ENCODE measurements at regions of chr6 and their contacts with region 1.

Region 1: GRCh38 chr6:118283766-118284165 is 264.3 kb upstream of the PLN start:
- DNase-seq: peak in 1 of 2 donors; percentile 73
- ATAC-seq: peak in 7 of 8 donors; percentile 29 to 68 (median 57)
- H3K4me3 ChIP-seq: peak overlapping the region in 1 of 10 donors; percentile 25
- H3K27ac ChIP-seq: peak overlapping the region in 2 of 10 donors; percentile 80 to 83
- H3K4me1 ChIP-seq: peaks cover 0 to 50% (median 9%) of the 10 kb centered on the region in 9 donors
- H3K27me3 ChIP-seq: no peaks in the 10 kb centered on the region
- CTCF ChIP-seq: peak; percentile 59 to 89 (median 82)

Region 2: GRCh38 chr6:118111708-118112107 is 172.1 kb before region 1 on chr6:
- intact Hi-C with region 1: no loop called
- DNase-seq: no peak
- ATAC-seq: no peak
- H3K4me3 ChIP-seq: no peak overlapping the region
- H3K27ac ChIP-seq: no peak overlapping the region
- H3K4me1 ChIP-seq: no peaks in the 10 kb centered on the region
- H3K27me3 ChIP-seq: no peaks in the 10 kb centered on the region
- CTCF ChIP-seq: no peak

Region 3: DNA sequence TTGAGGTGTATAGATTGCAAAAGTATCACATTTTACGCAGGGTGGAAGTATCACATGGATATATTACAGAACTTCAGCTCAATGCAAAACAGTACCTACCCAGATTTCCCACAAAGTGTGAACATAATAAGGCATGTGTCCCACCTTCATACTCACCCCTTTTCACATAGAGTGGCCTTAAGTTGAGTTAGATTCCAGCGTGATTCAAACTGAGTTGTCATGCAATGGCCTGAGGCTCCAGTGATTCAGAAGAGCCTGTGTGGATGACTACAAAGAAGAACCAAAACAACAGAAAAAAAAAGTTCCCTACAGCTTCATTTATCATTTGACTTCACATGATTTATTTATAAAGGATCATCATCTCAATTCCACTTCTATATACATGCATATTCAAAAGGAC is 67.0 kb before region 1 on chr6:
- intact Hi-C with region 1: no loop called
- DNase-seq: no peak
- ATAC-seq: no peak
- H3K4me3 ChIP-seq: no peak overlapping the region
- H3K27ac ChIP-seq: no peak overlapping the region
- H3K4me1 ChIP-seq: peaks cover 0 to 12% (median 3%) of the 10 kb centered on the region in 9 donors
- H3K27me3 ChIP-seq: no peaks in the 10 kb centered on the region
- CTCF ChIP-seq: no peak

Region 4: DNA sequence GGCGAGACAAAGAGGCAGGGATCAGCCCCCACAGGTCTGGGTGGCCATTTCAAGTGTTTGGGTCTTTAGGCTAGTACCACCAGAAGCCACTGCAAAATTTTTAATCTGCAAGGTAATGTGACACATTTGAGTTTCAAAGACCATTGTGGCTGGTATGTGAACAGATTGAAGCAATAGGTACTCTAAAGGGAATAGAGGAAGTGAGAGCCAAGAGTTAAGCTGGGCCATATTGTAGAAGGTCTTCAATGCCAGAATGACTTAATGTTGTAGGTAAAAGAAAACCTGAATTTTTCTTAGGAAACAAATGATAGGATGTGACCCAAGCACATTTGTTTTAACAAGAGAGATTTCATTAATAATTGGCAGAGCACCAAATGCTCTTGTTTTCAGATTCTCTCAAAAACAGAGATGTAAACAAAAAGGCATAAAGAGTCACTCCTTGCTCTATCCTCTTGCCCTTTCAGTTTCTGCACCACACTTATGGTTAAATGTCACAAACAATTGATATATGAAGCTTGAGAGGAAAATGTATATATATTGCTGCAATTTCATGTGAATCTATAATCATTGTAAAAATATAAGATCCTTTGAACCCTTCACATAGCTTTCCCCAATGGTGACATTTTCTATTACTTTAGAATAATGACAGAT is 42.8 kb before region 1 on chr6:
- intact Hi-C with region 1: loop called in 1 of 10 experiments (anchors 2 kb)
- DNase-seq: no peak
- ATAC-seq: no peak
- H3K4me3 ChIP-seq: no peak overlapping the region
- H3K27ac ChIP-seq: no peak overlapping the region
- H3K4me1 ChIP-seq: peaks cover 0 to 4% (median 0%) of the 10 kb centered on the region in 9 donors
- H3K27me3 ChIP-seq: peaks cover 0 to 3% (median 0%) of the 10 kb centered on the region in 7 donors
- CTCF ChIP-seq: no peak

Region 5: GRCh38 chr6:118509009-118509617 is 225.3 kb after region 1 on chr6:
- intact Hi-C with region 1: loop called (anchors 1 to 10 kb)
- DNase-seq: peak in 1 of 2 donors; percentile 43
- ATAC-seq: peak in 1 of 8 donors; percentile 43
- H3K4me3 ChIP-seq: no peak overlapping the region
- H3K27ac ChIP-seq: peak overlapping the region in 8 of 10 donors; percentile 33 to 83 (median 80)
- H3K4me1 ChIP-seq: peaks cover 0 to 33% (median 17%) of the 10 kb centered on the region in 9 donors
- H3K27me3 ChIP-seq: no peaks in the 10 kb centered on the region
- CTCF ChIP-seq: peak; percentile 39 to 81 (median 71)

Region 6: DNA sequence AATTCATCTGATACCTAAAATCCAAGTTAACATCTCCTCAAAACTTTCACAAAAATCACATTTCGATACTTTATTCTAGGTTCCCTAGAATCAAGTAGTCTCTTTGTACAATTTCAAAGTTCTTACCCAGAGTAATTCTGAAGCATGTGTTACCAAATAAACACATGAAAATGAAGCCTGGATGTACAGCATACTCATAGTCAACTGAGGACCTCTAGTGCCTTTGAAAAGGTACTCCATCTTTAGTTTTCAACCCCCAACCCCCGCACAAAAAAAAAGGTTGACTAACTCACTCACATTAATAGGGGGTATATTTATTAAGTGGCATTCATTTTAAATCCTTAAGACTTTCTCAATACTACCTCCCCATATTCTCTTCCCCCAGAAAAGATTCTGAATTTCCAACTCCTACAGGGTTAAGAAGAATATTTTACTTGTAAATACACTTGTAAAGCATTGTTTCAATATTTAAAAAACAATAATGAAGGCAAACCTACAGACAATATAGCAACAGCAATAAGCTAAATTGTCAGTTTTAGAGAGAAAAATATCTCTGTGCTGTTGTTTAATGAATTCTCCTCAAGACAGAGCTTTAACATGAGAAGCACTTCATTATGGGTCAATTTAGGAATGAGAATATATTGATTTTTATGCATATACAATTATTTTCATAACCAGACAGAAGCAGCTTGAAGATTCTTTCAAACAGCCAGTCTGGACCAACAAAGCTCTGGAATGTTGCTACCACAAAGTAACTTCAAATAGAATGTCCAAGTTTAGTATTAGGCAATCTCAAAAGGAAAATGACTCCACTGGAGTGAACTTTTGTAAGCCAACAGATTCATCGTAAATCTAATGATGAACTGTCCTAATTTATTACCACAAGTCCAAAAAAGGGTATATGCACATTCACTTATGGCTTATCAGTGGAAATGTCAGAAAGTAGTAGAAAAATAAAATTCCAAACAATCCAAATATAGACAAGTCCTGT is 267.6 kb after region 1 on chr6:
- intact Hi-C with region 1: loop called in 6 of 10 experiments (anchors 2 to 10 kb)
- DNase-seq: no peak
- ATAC-seq: peak in 7 of 8 donors; percentile 43 to 69 (median 67)
- H3K4me3 ChIP-seq: peak overlapping the region; percentile 29 to 60 (median 50)
- H3K27ac ChIP-seq: peak overlapping the region in 9 of 10 donors; percentile 37 to 89 (median 81)
- H3K4me1 ChIP-seq: peaks cover 0 to 12% (median 0%) of the 10 kb centered on the region in 9 donors
- H3K27me3 ChIP-seq: no peaks in the 10 kb centered on the region
- CTCF ChIP-seq: peak; percentile 30 to 74 (median 55)

Region 7: GRCh38 chr6:118580585-118581419 is 297.0 kb after region 1 on chr6:
- intact Hi-C with region 1: loop called in 7 of 10 experiments (anchors 2 to 10 kb)
- DNase-seq: peak in 1 of 2 donors; percentile 43
- ATAC-seq: peak; percentile 85 to 92 (median 91)
- H3K4me3 ChIP-seq: no peak overlapping the region
- H3K27ac ChIP-seq: peak overlapping the region in 1 of 10 donors; percentile 51
- H3K4me1 ChIP-seq: peaks cover 0 to 29% (median 7%) of the 10 kb centered on the region in 9 donors
- H3K27me3 ChIP-seq: no peaks in the 10 kb centered on the region
- CTCF ChIP-seq: peak; percentile 48 to 80 (median 71)

Region 8: GRCh38 chr6:118770112-118770788 is 486.5 kb after region 1 on chr6:
- intact Hi-C with region 1: loop called in 6 of 10 experiments (anchors 5 to 10 kb)
- DNase-seq: no peak
- ATAC-seq: no peak
- H3K4me3 ChIP-seq: no peak overlapping the region
- H3K27ac ChIP-seq: peak overlapping the region in 1 of 10 donors; percentile 89
- H3K4me1 ChIP-seq: peaks cover 0 to 32% (median 0%) of the 10 kb centered on the region in 9 donors
- H3K27me3 ChIP-seq: no peaks in the 10 kb centered on the region
- CTCF ChIP-seq: no peak

Region 9: DNA sequence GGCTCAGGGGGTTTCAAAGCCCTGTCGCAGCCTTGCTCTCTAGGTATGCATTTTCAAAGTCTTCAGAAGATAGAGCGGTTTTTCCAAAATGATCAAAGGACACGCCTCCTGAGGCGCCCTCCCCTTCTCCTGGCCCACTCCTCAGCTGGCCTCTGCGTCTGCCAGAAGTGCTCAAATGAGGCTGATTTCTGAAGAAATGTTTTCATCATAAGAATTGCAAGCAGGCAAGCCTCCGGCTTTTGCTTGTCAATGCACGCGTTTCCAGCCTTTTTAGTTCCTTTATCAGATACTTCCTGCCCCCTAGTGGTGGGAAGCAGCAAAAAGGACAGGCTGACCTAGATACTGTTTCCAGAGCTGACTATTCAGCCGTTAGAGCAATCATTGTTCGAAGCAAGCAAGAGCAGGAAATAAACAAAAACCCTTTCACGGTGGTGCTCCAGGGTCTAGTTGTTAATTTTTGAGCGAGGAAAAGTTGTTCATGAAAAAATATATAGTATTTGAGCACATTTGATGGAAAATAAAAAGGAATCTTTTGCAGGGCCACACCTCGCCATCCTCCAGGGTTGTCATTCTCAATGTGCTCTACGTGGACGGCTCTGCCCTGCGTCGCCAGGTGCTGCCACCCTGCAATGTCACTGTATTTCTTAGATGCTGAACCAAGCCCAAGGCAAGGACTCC is 516.8 kb after region 1 on chr6:
- intact Hi-C with region 1: loop called in 5 of 10 experiments (anchors 5 to 10 kb)
- DNase-seq: peak; percentile 25 to 88
- ATAC-seq: peak; percentile 58 to 94 (median 88)
- H3K4me3 ChIP-seq: peak overlapping the region in 5 of 10 donors; percentile 17 to 25 (median 18)
- H3K27ac ChIP-seq: no peak overlapping the region
- H3K4me1 ChIP-seq: peaks cover 3 to 11% (median 9%) of the 10 kb centered on the region in 9 donors
- H3K27me3 ChIP-seq: no peaks in the 10 kb centered on the region
- CTCF ChIP-seq: peak; percentile 65 to 93 (median 88)

Region 10: GRCh38 chr6:118993803-118994251 is 710.1 kb after region 1 on chr6:
- intact Hi-C with region 1: no loop called
- DNase-seq: no peak
- ATAC-seq: no peak
- H3K4me3 ChIP-seq: no peak overlapping the region
- H3K27ac ChIP-seq: no peak overlapping the region
- H3K4me1 ChIP-seq: no peaks in the 10 kb centered on the region
- H3K27me3 ChIP-seq: no peaks in the 10 kb centered on the region
- CTCF ChIP-seq: no peak